CD8-positive, alpha-beta memory T cell (primary cell): ENCODE measurements at regions of chr6 and their contacts with region 1.

Region 1: GRCh38 chr6:26156076-26156849 is 69.0 kb downstream of the HFE start:
- DNase-seq: peak; percentile 72 to 94 (median 83)
- H3K4me3 ChIP-seq: peak overlapping the region; percentile 84
- H3K4me3 Mint-ChIP-seq: peak overlapping the region; percentile 87 to 98 (median 94)
- H3K27ac ChIP-seq: peak overlapping the region; percentile 97
- H3K27ac Mint-ChIP-seq: peak overlapping the region; percentile 87 to 99 (median 96)
- H3K4me1 ChIP-seq: peaks cover 20% of the 10 kb centered on the region
- H3K4me1 Mint-ChIP-seq: peaks cover 26 to 47% (median 41%) of the 10 kb centered on the region in 3 donors
- H3K27me3 ChIP-seq: no peaks in the 10 kb centered on the region
- H3K27me3 Mint-ChIP-seq: peaks cover 0 to 1% of the 10 kb centered on the region in 2 donors

Region 2: GRCh38 chr6:26025894-26026832 is 130.1 kb before region 1 on chr6:
- CTCF ChIA-PET with region 1: interaction called, 13 read pairs
- POLR2A ChIA-PET with region 1: interaction called, 60 read pairs
- DNase-seq: peak; percentile 86 to 95 (median 94)
- H3K4me3 ChIP-seq: peak overlapping the region; percentile 59
- H3K4me3 Mint-ChIP-seq: peak overlapping the region; percentile 85 to 95 (median 93)
- H3K27ac ChIP-seq: peak overlapping the region; percentile 86
- H3K27ac Mint-ChIP-seq: peak overlapping the region; percentile 93 to 100 (median 98)
- H3K4me1 ChIP-seq: peaks cover 21% of the 10 kb centered on the region
- H3K4me1 Mint-ChIP-seq: peaks cover 30 to 77% (median 55%) of the 10 kb centered on the region in 3 donors
- H3K27me3 ChIP-seq: no peaks in the 10 kb centered on the region
- H3K27me3 Mint-ChIP-seq: peaks cover 0 to 9% of the 10 kb centered on the region in 2 donors

Region 3: GRCh38 chr6:26087284-26088115 is 68.8 kb before region 1 on chr6 and contains the start of gene HFE:
- CTCF ChIA-PET with region 1: no interaction called
- POLR2A ChIA-PET with region 1: interaction called, 14 read pairs
- DNase-seq: peak; percentile 8 to 49 (median 27)
- H3K4me3 ChIP-seq: peak within 1 kb of the TSS; percentile 86
- H3K4me3 Mint-ChIP-seq: peak within 1 kb of the TSS; percentile 88 to 96 (median 91)
- H3K27ac ChIP-seq: peak within 1 kb of the TSS; percentile 70
- H3K27ac Mint-ChIP-seq: peak within 1 kb of the TSS; percentile 78 to 95 (median 89)
- H3K4me1 ChIP-seq: peaks cover 26% of the 10 kb centered on the region
- H3K4me1 Mint-ChIP-seq: peaks cover 31 to 37% (median 36%) of the 10 kb centered on the region in 3 donors
- H3K27me3 ChIP-seq: no peaks in the 10 kb centered on the region
- H3K27me3 Mint-ChIP-seq: no peaks in the 10 kb centered on the region
- total RNA-seq, gene HFE: 0.37 to 1.1 TPM

Region 4: GRCh38 chr6:26183581-26184366 is 27.5 kb after region 1 on chr6:
- CTCF ChIA-PET with region 1: interaction called, 17 read pairs
- POLR2A ChIA-PET with region 1: interaction called, 104 read pairs
- DNase-seq: peak; percentile 31 to 78 (median 72)
- H3K4me3 ChIP-seq: peak overlapping the region; percentile 81
- H3K4me3 Mint-ChIP-seq: peak overlapping the region; percentile 86 to 99 (median 97)
- H3K27ac ChIP-seq: peak overlapping the region; percentile 71
- H3K27ac Mint-ChIP-seq: peak overlapping the region; percentile 71 to 99 (median 96)
- H3K4me1 ChIP-seq: peaks cover 33% of the 10 kb centered on the region
- H3K4me1 Mint-ChIP-seq: peaks cover 41 to 53% (median 44%) of the 10 kb centered on the region in 3 donors
- H3K27me3 ChIP-seq: no peaks in the 10 kb centered on the region
- H3K27me3 Mint-ChIP-seq: no peaks in the 10 kb centered on the region

Region 5: DNA sequence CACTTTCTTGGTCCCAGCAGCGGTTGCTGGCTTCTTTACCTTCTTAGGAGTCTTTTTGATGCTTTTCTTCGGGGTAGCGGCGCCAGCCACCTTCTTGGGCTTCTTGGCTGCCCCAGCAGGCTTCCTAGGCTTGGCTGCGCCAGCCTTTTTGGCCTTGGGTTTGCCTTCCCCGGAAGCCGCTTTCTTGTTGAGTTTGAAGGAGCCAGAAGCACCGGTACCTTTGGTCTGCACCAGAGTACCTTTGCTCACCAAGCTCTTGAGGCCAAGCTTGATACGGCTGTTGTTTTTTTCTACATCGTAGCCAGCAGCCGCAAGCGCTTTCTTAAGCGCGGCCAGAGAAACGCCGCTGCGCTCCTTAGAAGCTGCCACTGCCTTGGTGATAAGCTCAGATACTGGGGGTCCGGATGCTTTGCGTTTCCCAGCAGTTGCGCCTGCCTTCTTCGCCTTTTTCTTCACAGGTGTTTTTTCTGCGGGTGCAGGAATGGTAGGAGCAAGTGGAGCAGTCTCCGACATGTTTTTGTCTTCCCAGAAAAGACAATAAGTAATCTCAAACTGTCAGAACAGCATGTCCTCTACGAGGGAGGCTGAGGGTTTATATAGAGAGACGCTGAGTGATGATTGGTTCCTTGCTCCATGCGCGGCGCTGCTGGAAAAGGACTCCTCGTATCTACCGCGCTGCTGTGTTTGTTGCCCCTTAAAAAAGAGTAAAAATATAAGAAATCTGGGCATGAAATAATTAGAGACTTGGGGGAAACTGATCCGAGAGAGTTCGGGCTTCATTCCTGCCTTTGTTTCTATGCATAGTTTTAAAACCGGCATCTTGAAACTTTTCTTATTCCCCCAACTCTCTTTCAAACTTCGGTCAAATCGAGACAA is 78.4 kb after region 1 on chr6:
- CTCF ChIA-PET with region 1: interaction called, 7 read pairs
- POLR2A ChIA-PET with region 1: interaction called, 88 read pairs
- DNase-seq: peak; percentile 38 to 84 (median 76)
- H3K4me3 ChIP-seq: peak overlapping the region; percentile 94
- H3K4me3 Mint-ChIP-seq: peak overlapping the region; percentile 87 to 95 (median 91)
- H3K27ac ChIP-seq: peak overlapping the region; percentile 88
- H3K27ac Mint-ChIP-seq: peak overlapping the region; percentile 87 to 98 (median 96)
- H3K4me1 ChIP-seq: peaks cover 19% of the 10 kb centered on the region
- H3K4me1 Mint-ChIP-seq: peaks cover 28 to 35% (median 35%) of the 10 kb centered on the region in 3 donors
- H3K27me3 ChIP-seq: no peaks in the 10 kb centered on the region
- H3K27me3 Mint-ChIP-seq: peaks cover 0 to 5% of the 10 kb centered on the region in 2 donors

Region 6: DNA sequence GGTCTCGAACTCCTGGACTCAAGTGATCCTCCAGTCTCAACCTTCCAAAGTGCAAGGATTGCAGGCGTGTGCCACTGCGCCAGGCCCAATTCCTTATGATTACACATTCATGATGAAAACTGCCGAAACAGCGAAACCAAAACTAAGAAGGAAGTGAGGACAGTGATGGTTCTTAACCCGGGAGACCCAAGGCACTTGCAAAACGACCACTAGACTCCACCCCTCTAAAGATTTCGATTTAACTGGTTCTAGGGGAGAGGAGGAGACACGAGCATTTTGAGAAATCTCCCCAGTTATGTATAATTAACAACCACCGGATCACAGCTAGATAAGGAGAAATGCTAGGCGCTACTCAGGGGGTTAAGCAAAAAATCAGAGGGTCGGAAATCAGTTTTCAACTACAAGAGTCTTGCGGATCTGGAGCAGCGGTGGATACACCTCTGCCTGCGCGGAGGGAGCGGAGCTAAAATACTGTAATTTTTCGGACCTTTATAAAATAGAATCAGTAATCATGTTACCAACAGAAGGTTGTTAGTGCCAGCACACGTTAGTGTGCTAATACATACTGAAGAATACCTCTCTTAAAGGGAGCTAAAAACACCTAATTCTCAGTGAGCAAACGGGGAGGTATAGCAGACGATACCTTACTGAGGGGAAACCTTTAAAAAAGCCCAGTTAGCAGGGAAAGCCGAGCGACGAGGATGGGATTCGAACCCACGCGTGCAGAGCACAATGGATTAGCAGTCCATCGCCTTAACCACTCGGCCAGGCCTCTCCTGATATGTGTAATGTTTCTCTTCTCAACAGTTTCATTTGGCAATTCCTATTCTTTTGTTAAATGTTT is 148.8 kb after region 1 on chr6:
- CTCF ChIA-PET with region 1: no interaction called
- POLR2A ChIA-PET with region 1: interaction called, 14 read pairs
- DNase-seq: peak; percentile 20 to 75 (median 64)
- H3K4me3 ChIP-seq: peak overlapping the region; percentile 49
- H3K4me3 Mint-ChIP-seq: peak overlapping the region; percentile 88 to 95 (median 94)
- H3K27ac ChIP-seq: peak overlapping the region; percentile 65
- H3K27ac Mint-ChIP-seq: peak overlapping the region; percentile 85 to 99 (median 95)
- H3K4me1 ChIP-seq: peaks cover 19% of the 10 kb centered on the region
- H3K4me1 Mint-ChIP-seq: peaks cover 41 to 59% (median 51%) of the 10 kb centered on the region in 3 donors
- H3K27me3 ChIP-seq: no peaks in the 10 kb centered on the region
- H3K27me3 Mint-ChIP-seq: peaks cover 0 to 8% of the 10 kb centered on the region in 2 donors

Region 7: DNA sequence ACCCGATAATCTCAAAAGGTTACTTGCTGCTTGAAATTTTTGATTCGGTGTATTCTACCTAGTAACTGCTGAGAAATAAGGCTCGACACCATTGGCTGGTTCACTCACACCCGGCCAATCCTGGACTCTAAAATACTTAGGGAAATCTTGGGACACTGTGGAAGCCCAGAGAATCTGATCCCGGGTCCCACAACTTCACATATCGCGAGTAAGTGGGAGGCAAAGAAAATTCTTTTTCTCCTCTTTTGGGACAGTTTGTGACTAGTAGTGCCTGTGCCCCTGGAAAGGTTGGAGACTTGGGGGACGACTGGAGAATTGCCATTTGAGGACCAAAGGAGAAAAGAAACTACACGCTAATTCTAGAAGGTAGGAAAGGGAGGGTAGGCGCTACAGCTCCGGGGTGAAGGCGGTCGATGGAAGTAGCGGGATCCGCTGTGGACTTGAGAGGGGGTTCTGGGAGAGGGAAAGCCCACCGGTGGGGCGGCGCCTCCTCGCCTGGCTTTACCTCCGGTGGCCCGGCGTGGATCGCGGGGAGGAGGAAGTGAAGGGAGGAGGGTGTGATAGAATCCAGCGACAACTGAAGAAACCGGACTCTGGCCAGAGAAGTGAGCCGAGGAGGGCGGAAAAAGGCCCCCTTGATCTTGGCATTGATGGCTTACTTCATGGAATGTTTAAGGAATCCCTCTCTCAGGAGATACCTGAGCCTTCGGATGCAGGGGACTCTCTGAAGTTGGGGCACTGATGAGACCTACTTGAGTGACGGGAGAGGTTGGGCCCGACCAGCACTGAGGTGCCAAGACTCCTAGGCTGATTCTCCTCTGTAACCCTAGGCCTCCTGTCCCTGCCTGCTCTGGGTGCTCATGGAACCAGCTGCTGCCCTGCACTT is 265.2 kb after region 1 on chr6:
- CTCF ChIA-PET with region 1: no interaction called
- POLR2A ChIA-PET with region 1: no interaction called
- DNase-seq: peak; percentile 28 to 71 (median 65)
- H3K4me3 ChIP-seq: peak overlapping the region; percentile 81
- H3K4me3 Mint-ChIP-seq: no peak overlapping the region
- H3K27ac ChIP-seq: peak overlapping the region; percentile 83
- H3K27ac Mint-ChIP-seq: no peak overlapping the region
- H3K4me1 ChIP-seq: peaks cover 12% of the 10 kb centered on the region
- H3K4me1 Mint-ChIP-seq: peaks cover 12 to 32% (median 18%) of the 10 kb centered on the region in 3 donors
- H3K27me3 ChIP-seq: no peaks in the 10 kb centered on the region
- H3K27me3 Mint-ChIP-seq: no peaks in the 10 kb centered on the region

Region 8: DNA sequence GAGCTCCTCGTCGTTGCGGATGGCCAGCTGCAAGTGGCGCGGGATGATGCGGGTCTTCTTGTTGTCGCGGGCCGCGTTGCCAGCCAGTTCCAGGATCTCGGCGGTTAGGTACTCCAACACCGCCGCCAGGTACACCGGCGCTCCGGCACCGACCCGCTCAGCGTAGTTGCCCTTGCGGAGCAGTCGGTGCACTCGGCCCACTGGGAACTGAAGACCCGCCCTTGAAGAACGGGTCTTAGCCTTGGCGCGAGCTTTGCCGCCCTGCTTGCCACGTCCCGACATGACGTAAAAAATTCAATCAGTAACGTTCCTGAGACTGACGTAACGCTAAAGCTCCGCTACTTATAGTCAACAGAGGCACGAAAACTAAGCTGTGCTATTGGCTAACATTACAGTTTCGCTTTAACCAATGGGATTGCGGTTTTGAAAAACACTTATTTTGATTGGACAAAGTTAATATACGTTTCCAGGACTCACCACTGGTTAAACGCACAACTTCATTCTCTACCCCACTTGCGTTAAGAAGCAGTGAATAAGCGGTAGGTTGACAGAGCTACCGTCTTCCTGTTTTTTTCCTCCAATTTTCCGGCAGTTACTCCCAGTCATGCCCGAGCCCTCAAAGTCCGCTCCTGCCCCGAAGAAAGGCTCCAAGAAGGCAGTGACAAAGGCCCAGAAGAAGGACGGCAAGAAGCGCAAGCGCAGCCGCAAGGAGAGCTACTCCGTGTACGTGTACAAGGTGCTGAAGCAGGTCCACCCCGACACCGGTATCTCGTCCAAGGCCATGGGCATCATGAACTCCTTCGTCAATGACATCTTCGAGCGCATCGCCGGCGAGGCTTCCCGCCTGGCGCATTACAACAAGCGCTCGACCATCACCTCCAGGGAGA is 1682.0 kb after region 1 on chr6:
- CTCF ChIA-PET with region 1: interaction called, 3 read pairs
- POLR2A ChIA-PET with region 1: interaction called, 35 read pairs
- DNase-seq: peak; percentile 67 to 93 (median 92)
- H3K4me3 ChIP-seq: peak overlapping the region; percentile 71
- H3K4me3 Mint-ChIP-seq: no peak overlapping the region
- H3K27ac ChIP-seq: peak overlapping the region; percentile 99
- H3K27ac Mint-ChIP-seq: no peak overlapping the region
- H3K4me1 ChIP-seq: peaks cover 30% of the 10 kb centered on the region
- H3K4me1 Mint-ChIP-seq: peaks cover 12 to 23% (median 19%) of the 10 kb centered on the region in 3 donors
- H3K27me3 ChIP-seq: no peaks in the 10 kb centered on the region
- H3K27me3 Mint-ChIP-seq: peaks cover 5 to 13% of the 10 kb centered on the region in 2 donors